CD8-positive, alpha-beta T cell (primary cell): ENCODE measurements at regions of chr20 and their contacts with region 1.

Region 1: GRCh38 chr20:46349035-46349741 is 40.9 kb upstream of the CDH22 start:
- DNase-seq: peak in 7 of 9 experiments; percentile 13 to 64 (median 49)
- ATAC-seq: peak; percentile 65
- H3K4me3 ChIP-seq: no peak overlapping the region
- H3K4me3 Mint-ChIP-seq: no peak overlapping the region
- H3K27ac ChIP-seq: no peak overlapping the region
- H3K27ac Mint-ChIP-seq: no peak overlapping the region
- H3K4me1 ChIP-seq: no peaks in the 10 kb centered on the region
- H3K4me1 Mint-ChIP-seq: peaks cover 18% of the 10 kb centered on the region
- H3K27me3 ChIP-seq: no peaks in the 10 kb centered on the region
- H3K27me3 Mint-ChIP-seq: no peaks in the 10 kb centered on the region
- CTCF ChIP-seq: peak; percentile 56

Region 2: GRCh38 chr20:45322952-45323383 is 1026.2 kb before region 1 on chr20:
- CTCF ChIA-PET with region 1: no interaction called
- POLR2A ChIA-PET with region 1: no interaction called
- intact Hi-C with region 1: no loop called
- DNase-seq: peak in 1 of 9 experiments; percentile 26
- ATAC-seq: no peak
- H3K4me3 ChIP-seq: no peak overlapping the region
- H3K4me3 Mint-ChIP-seq: no peak overlapping the region
- H3K27ac ChIP-seq: no peak overlapping the region
- H3K27ac Mint-ChIP-seq: no peak overlapping the region
- H3K4me1 ChIP-seq: peaks cover 26% of the 10 kb centered on the region
- H3K4me1 Mint-ChIP-seq: peaks cover 17% of the 10 kb centered on the region
- H3K27me3 ChIP-seq: no peaks in the 10 kb centered on the region
- H3K27me3 Mint-ChIP-seq: no peaks in the 10 kb centered on the region
- CTCF ChIP-seq: no peak

Region 3: DNA sequence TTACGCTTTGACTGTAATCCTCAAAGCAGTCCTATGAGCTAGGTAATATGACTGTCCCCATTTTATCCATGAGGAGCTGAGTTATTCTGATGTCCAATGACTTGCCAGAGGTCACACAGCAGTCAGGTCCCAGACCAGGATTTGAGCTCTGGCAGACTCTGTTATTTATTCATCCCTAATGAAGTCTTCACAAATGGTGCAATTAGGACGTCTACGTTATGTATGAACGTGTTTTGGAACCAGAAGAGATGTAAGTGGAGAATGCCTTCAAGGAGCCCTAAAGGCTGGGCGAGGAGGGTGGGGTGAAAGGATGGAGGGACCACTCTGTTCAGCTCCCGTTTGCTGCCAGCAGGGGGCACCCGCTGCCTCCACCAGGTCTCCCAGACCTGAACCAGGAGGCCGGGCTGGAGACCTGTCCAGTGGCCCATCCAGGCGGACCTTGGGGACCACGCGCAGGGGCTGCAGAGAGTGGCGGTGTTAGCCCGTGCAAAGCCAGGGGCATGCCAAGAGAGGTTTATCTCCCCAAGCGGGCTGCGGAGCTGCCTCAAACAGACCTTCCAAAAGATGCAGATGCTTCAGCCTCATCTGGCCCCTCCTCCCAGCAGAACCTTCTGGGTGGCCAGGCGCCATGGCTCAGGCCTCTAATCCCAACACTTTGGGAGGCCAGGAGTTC is 361.9 kb before region 1 on chr20:
- CTCF ChIA-PET with region 1: no interaction called
- POLR2A ChIA-PET with region 1: no interaction called
- intact Hi-C with region 1: loop called in 1 of 2 experiments (anchors 2 kb)
- DNase-seq: peak; percentile 55 to 84 (median 81)
- ATAC-seq: peak; percentile 99
- H3K4me3 ChIP-seq: no peak overlapping the region
- H3K4me3 Mint-ChIP-seq: no peak overlapping the region
- H3K27ac ChIP-seq: no peak overlapping the region
- H3K27ac Mint-ChIP-seq: no peak overlapping the region
- H3K4me1 ChIP-seq: peaks cover 6% of the 10 kb centered on the region
- H3K4me1 Mint-ChIP-seq: no peaks in the 10 kb centered on the region
- H3K27me3 ChIP-seq: no peaks in the 10 kb centered on the region
- H3K27me3 Mint-ChIP-seq: peaks cover 15% of the 10 kb centered on the region
- CTCF ChIP-seq: peak; percentile 94

Region 4: GRCh38 chr20:46022411-46023147 is 326.6 kb before region 1 on chr20:
- CTCF ChIA-PET with region 1: no interaction called
- POLR2A ChIA-PET with region 1: no interaction called
- intact Hi-C with region 1: loop called in 1 of 2 experiments (anchors 5 kb)
- DNase-seq: peak; percentile 47 to 89 (median 79)
- ATAC-seq: peak; percentile 62
- H3K4me3 ChIP-seq: peak overlapping the region; percentile 22 to 42
- H3K4me3 Mint-ChIP-seq: peak overlapping the region; percentile 76
- H3K27ac ChIP-seq: no peak overlapping the region
- H3K27ac Mint-ChIP-seq: no peak overlapping the region
- H3K4me1 ChIP-seq: peaks cover 14% of the 10 kb centered on the region
- H3K4me1 Mint-ChIP-seq: peaks cover 20% of the 10 kb centered on the region
- H3K27me3 ChIP-seq: peaks cover 17 to 18% of the 10 kb centered on the region in 2 experiments
- H3K27me3 Mint-ChIP-seq: peaks cover 63% of the 10 kb centered on the region
- CTCF ChIP-seq: peak; percentile 58

Region 5: DNA sequence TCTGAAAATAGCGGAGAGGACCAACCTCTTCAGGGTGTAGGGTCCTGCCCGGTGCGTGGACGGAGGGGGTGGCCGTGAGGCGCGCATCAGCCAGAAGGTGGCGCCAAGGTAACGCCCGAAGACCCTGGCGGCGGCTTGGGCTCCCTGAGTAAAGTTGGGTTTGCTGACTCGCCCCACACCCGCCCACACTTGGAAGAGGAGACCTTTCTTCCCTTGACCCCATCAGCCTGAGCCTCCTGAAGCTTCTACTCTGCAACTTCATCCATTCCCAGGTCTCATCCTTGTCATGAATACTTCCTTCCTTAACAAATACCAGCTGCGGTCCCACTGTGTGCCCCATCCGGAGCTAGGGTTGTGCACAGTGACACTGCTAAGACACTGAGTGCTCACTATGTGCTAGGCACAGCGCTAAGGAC is 216.5 kb before region 1 on chr20:
- CTCF ChIA-PET with region 1: no interaction called
- POLR2A ChIA-PET with region 1: no interaction called
- intact Hi-C with region 1: loop called in 1 of 2 experiments (anchors 5 kb)
- DNase-seq: peak in 8 of 9 experiments; percentile 35 to 72 (median 61)
- ATAC-seq: peak; percentile 73
- H3K4me3 ChIP-seq: no peak overlapping the region
- H3K4me3 Mint-ChIP-seq: no peak overlapping the region
- H3K27ac ChIP-seq: no peak overlapping the region
- H3K27ac Mint-ChIP-seq: no peak overlapping the region
- H3K4me1 ChIP-seq: no peaks in the 10 kb centered on the region
- H3K4me1 Mint-ChIP-seq: no peaks in the 10 kb centered on the region
- H3K27me3 ChIP-seq: no peaks in the 10 kb centered on the region
- H3K27me3 Mint-ChIP-seq: peaks cover 50% of the 10 kb centered on the region
- CTCF ChIP-seq: peak; percentile 67

Region 6: GRCh38 chr20:46406199-46406985 is 57.2 kb after region 1 on chr20 and contains the start of gene ELMO2:
- CTCF ChIA-PET with region 1: interaction called, 14 read pairs
- POLR2A ChIA-PET with region 1: interaction called, 5 read pairs
- intact Hi-C with region 1: no loop called
- DNase-seq: peak; percentile 89 to 98 (median 96)
- ATAC-seq: peak; percentile 90
- H3K4me3 ChIP-seq: peak within 1 kb of the TSS; percentile 89 to 91
- H3K4me3 Mint-ChIP-seq: peak within 1 kb of the TSS; percentile 99
- H3K27ac ChIP-seq: peak within 1 kb of the TSS; percentile 72 to 82
- H3K27ac Mint-ChIP-seq: peak within 1 kb of the TSS; percentile 98
- H3K4me1 ChIP-seq: peaks cover 53% of the 10 kb centered on the region
- H3K4me1 Mint-ChIP-seq: peaks cover 70% of the 10 kb centered on the region
- H3K27me3 ChIP-seq: no peaks in the 10 kb centered on the region
- H3K27me3 Mint-ChIP-seq: no peaks in the 10 kb centered on the region
- CTCF ChIP-seq: no peak
- total RNA-seq, gene ELMO2: 59.2 to 62.8 TPM

Region 7: DNA sequence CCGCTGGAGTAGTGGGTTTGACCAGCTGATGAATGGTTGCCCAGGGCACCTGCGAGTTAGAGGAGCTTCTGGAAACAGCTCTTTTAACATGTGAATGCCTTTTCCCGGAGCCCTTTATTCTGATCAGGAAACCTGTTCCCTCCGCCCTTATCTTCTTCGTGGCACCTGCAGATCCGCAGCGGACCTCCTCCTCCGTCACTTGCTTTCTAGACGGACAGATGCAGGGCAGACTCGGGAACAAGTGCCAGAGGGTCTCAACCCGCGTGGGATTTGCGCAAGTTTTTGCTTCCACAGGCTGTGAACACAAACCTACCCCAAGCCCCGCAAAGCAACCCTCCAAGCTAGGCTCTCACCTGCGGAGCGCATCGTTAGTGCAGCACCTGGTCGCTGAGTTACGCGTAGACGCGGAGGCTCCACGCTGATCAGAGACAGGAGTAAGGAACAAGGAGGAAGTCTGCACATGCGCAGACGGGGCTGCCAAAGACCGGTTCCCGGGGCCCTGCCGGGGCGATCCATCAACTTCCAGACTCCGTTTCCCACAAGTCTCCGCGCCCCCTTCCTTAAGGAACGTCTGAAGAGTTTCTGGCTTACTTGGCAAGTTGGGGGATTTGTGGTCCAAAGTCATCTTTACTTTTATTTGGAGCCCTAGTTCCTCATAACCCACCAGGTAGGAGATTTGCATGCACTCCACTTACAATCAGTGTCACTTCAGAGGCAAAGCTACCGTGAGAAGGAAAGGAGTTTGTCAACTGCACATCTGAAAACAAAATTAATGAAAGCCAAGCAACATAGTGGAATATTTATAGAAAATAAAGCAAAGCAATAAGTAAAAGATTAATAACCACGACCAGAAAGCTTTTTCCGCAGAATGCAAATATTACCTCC is 109.9 kb after region 1 on chr20:
- CTCF ChIA-PET with region 1: no interaction called
- POLR2A ChIA-PET with region 1: no interaction called
- intact Hi-C with region 1: no loop called
- DNase-seq: peak in 2 of 9 experiments; percentile 5 to 6
- ATAC-seq: no peak
- H3K4me3 ChIP-seq: no peak overlapping the region
- H3K4me3 Mint-ChIP-seq: no peak overlapping the region
- H3K27ac ChIP-seq: no peak overlapping the region
- H3K27ac Mint-ChIP-seq: no peak overlapping the region
- H3K4me1 ChIP-seq: no peaks in the 10 kb centered on the region
- H3K4me1 Mint-ChIP-seq: peaks cover 2% of the 10 kb centered on the region
- H3K27me3 ChIP-seq: no peaks in the 10 kb centered on the region
- H3K27me3 Mint-ChIP-seq: peaks cover 46% of the 10 kb centered on the region
- CTCF ChIP-seq: no peak